Endothelial cell of umbilical vein (primary cell): ENCODE measurements at regions of chr15 and their contacts with region 1.

Region 1: DNA sequence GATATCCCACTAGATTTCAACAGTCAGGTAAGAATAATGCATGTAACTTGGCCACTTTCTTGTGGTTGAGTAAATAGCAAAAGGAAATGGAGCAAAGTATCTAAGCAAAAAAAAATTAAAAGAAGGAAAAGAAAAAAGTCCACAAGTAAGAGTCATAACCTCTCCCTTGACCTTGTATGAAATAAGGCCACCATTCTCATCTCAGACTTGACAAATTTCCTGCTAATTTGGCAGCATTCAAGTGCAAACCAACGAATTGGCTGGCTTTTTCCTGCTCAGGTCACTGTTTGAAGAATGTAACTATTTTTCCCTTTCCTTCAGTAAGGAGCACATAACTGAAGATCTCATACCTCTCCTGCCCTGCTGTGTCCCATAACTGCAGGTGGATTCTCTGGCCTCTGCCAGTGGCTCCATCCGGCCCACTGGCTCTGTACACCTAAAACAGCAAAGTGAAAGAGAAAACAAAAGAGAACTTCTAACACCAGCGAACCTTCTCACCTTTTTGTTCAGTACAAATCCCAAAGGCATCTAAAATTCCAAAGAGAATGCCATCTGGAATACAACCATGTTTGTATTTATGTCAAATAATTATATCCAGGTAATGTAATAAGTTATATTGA is 33.4 kb upstream of the RSL24D1 start:
- DNase-seq: peak; percentile 80
- H3K4me3 ChIP-seq: peak overlapping the region in 1 of 3 experiments; percentile 39
- H3K27ac ChIP-seq: peak overlapping the region; percentile 62
- H3K4me1 ChIP-seq: peaks cover 18% of the 10 kb centered on the region
- H3K27me3 ChIP-seq: no peaks in the 10 kb centered on the region
- CTCF ChIP-seq: no peak
- POLR2A ChIP-seq: no peak

Region 2: DNA sequence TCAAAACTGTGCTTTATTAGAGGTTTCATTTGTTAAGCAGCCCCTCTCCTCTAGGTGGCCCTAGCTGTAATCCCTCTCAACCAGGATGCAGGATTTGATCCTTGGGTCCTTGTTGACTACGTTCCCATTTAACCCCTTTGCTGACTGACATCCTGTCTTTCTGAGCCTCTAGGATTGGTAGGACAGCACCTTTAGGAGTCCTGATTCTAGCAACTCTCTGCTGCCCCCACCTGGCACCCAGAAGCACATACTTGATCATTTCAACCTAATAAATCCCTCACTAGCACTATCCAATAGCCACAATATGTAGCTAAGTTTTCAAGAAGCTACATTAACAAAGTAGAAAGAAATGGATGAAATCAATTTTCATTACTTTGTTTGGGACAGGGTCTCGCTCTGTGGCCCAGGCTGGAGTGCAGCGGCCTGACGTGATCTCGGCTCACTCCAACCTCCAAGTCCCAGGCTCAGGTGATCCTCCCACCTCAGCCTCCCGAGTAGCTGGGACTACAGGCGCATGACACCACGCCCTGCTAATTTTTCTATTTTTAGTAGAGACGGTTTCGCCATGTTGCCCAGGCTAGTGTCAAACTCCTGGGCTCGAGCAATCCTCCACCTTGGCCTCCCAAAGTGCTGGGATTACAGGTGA is 61.7 kb before region 1 on chr15:
- CTCF ChIA-PET with region 1: no interaction called
- POLR2A ChIA-PET with region 1: no interaction called
- dilution Hi-C with region 1: no loop called
- intact Hi-C with region 1: no loop called
- DNase-seq: peak; percentile 77
- H3K4me3 ChIP-seq: no peak overlapping the region
- H3K27ac ChIP-seq: no peak overlapping the region
- H3K4me1 ChIP-seq: no peaks in the 10 kb centered on the region
- H3K27me3 ChIP-seq: no peaks in the 10 kb centered on the region
- CTCF ChIP-seq: peak; percentile 74 to 81
- POLR2A ChIP-seq: no peak

Region 3: DNA sequence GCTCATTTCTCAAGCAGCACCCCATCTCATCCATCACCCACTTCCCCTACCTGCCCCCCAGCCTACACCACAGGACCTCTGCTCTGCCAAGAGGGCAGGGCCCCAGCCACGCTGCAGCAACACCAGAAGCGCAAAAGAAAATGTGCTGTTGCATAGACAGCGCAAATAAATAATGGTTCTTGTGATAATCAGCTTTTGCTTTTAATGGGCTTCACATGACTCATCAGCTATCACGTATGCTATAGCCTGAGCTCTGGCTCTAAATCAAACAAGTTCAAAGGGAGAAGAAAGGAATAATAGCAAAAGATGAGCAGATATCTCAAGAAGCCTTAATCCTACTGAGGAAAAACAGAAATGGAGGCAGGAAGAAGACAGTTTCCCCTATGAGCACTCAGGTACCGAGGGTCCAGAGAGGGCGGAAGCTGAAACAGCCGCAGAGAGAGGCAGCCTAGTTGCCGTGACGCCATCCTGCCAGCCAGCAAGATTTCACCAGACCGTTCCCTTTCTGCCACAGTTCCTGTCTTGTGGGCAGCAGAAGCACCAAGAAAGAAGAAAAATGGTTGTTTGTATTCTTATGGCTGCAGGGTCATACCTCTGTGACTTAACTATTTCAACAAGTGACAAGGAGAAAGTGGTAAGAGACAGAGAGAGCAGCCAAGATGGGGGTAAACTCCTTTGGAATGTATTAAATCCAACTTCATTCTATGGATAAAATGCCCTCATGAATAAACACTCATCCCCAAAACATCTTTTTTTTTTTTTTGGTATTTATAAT is 37.4 kb after region 1 on chr15:
- CTCF ChIA-PET with region 1: interaction called, 11 read pairs
- POLR2A ChIA-PET with region 1: no interaction called
- dilution Hi-C with region 1: no loop called
- intact Hi-C with region 1: no loop called
- DNase-seq: peak; percentile 55
- H3K4me3 ChIP-seq: peak overlapping the region in 2 of 3 experiments; percentile 6 to 19
- H3K27ac ChIP-seq: peak overlapping the region; percentile 34
- H3K4me1 ChIP-seq: peaks cover 15% of the 10 kb centered on the region
- H3K27me3 ChIP-seq: no peaks in the 10 kb centered on the region
- CTCF ChIP-seq: no peak
- POLR2A ChIP-seq: no peak

Region 4: DNA sequence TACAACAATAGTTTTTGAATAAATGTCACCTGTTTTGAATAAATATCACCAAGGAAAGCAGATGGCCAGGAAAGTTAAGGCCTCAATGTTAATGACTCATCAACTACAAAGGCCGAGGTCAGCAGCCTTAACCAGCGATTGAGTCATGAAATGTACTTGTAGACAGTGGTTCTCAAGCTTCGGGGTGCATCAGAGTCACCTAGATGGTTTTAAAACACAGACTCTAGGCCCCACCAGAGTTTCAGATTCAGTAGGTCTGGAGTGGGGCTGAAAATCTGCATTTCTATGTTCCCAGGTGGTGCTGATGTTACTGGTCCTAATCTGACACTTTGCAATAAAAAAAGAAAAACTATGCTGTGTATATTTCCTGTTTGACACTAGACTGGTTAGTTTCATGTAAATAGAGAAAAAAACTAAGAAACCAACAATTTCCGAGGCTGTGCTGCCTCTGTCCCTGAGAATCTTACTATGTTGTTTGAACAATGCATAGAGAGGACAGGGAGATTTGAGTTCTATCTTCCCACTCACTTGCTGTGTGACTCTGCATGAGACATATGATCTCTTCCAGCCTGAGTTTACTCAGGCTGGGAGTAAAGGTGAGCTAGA is 49.7 kb after region 1 on chr15:
- CTCF ChIA-PET with region 1: interaction called, 5 read pairs
- POLR2A ChIA-PET with region 1: no interaction called
- dilution Hi-C with region 1: no loop called
- intact Hi-C with region 1: loop called (anchors 1 kb)
- DNase-seq: peak; percentile 84
- H3K4me3 ChIP-seq: no peak overlapping the region
- H3K27ac ChIP-seq: peak overlapping the region; percentile 86
- H3K4me1 ChIP-seq: peaks cover 39% of the 10 kb centered on the region
- H3K27me3 ChIP-seq: no peaks in the 10 kb centered on the region
- CTCF ChIP-seq: no peak
- POLR2A ChIP-seq: no peak

Region 5: DNA sequence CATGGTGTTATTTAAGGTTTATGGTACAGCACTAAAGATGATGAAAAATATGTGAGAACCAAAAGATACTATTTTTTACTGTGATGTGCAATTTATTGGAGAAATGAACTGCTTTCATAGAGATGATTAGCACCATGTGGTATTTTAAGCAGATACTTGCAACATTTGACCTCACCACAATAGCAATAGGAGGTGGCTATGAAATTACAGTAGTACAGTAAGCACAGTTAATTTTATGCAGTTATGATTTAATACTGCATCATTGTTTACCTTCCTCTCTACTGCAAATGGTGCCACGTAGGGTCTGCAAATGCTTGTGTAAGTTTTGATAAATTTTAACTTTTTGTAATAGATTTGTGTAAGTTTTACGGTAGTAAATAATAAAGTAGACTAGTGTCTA is 343.9 kb after region 1 on chr15:
- CTCF ChIA-PET with region 1: no interaction called
- POLR2A ChIA-PET with region 1: no interaction called
- dilution Hi-C with region 1: no loop called
- intact Hi-C with region 1: no loop called
- DNase-seq: no peak
- H3K4me3 ChIP-seq: no peak overlapping the region
- H3K27ac ChIP-seq: no peak overlapping the region
- H3K4me1 ChIP-seq: no peaks in the 10 kb centered on the region
- H3K27me3 ChIP-seq: no peaks in the 10 kb centered on the region
- CTCF ChIP-seq: no peak
- POLR2A ChIP-seq: no peak